BJ (cell line): ENCODE measurements at regions of chr15 and their contacts with region 1.

Region 1: DNA sequence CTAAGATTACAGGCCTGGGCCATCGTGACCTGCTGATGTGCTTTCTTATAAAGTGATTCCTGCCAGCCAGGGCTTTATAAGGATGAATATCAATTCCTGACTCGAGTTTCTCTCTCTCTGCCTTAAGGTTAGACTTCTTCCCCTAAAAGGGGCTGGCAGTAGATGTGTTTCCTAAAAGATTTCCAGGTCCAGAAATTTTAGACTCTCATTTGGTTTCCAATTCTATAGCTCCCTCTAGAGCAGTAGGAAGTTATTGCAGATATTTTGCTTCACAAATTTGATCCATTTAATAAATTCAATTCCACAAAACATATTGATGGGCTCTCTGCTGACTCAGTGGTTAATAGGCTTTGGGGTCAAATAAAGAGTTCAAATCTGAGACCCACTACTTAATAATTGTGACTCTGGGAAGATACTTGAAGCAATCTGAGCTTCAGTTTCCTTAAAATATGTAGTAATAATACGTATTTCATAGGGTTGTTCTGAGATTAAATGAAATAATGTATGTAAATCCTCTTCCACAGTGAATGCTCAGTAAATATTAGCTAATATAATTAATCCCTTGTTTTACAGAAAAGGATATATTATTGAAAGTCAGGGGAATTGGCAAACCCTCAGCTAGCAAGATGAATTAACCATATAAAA is 2.1 kb downstream of the TRIM69 start:
- DNase-seq: peak; percentile 12
- H3K4me3 ChIP-seq: no peak overlapping the region
- H3K27me3 ChIP-seq: no peaks in the 10 kb centered on the region
- CTCF ChIP-seq: peak; percentile 70

Region 2: GRCh38 chr15:44584162-44584749 is 154.2 kb before region 1 on chr15:
- CTCF ChIA-PET with region 1: interaction called, 51 read pairs
- POLR2A ChIA-PET with region 1: interaction called, 3 read pairs
- DNase-seq: no peak
- H3K4me3 ChIP-seq: no peak overlapping the region
- H3K27me3 ChIP-seq: no peaks in the 10 kb centered on the region
- CTCF ChIP-seq: peak; percentile 51

Region 3: GRCh38 chr15:44711356-44712107 is 26.9 kb before region 1 on chr15 and contains the start of gene B2M:
- CTCF ChIA-PET with region 1: interaction called, 13 read pairs
- POLR2A ChIA-PET with region 1: no interaction called
- DNase-seq: peak; percentile 77
- H3K4me3 ChIP-seq: peak within 1 kb of the TSS; percentile 98
- H3K27me3 ChIP-seq: no peaks in the 10 kb centered on the region
- CTCF ChIP-seq: no peak
- polyA plus RNA-seq, gene B2M: 2,480 and 4,424 TPM in 2 replicates

Region 4: GRCh38 chr15:44753345-44753744 is 14.9 kb after region 1 on chr15:
- CTCF ChIA-PET with region 1: interaction called, 26 read pairs
- POLR2A ChIA-PET with region 1: no interaction called
- DNase-seq: no peak
- H3K4me3 ChIP-seq: no peak overlapping the region
- H3K27me3 ChIP-seq: peaks cover 3% of the 10 kb centered on the region
- CTCF ChIP-seq: no peak